ENCODE measurements at regions of chr7 and their contacts with region 1.

Region 1: DNA sequence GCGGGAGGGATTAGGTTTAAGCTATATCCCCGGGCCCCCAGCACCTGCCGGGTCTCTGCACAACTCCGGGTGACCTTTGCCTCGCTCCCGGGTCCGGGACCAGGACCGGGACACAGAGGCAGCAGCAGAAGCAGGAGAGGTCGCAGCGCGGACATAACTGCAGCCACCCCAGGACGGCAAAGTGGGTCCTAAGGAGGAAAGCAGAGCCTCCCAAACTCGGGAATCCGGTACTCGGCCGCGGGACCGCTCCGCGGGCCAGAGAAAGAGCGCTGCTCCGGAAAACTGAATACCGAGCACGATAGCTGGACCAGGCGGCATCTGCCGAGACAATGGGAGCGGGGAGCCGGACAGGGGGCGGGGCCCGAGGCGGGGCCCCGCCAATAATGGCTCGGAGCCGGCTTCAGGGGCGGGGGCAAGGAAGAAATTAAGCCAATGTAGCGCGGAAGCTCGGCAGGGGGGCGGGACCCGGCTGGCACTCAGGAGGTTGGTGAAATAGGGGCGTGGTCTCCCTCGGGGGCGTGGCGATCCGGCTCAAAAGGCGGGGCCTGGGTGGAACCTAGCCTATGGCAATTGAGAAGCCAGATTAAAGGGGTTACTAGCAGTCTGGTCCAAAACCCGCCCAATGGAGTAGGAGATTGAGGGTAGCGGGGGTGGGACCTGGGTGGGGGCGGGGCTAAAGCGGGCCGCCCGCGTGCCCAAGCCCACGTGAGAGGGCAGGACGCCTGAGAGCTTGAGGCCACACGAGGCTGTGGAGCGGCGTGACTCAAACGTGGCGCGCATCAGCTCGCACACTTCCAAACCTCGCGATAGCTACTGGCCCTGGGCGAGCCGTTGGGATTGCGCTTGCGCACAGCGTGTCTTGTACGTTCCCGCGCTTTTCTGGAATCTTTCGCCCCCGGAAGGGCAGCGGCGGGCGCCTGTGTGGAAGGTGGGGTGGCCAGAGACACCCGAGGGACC is at the starts of genes GPC2 and STAG3:
- DNase-seq: peak; percentile 97
- ATAC-seq: peak; percentile 95
- H3K4me3 Mint-ChIP-seq: peak within 1 kb of the TSS; percentile 84
- H3K27ac Mint-ChIP-seq: peak within 1 kb of the TSS; percentile 68
- H3K4me1 Mint-ChIP-seq: peaks cover 21% of the 10 kb centered on the region
- H3K27me3 Mint-ChIP-seq: peaks cover 4% of the 10 kb centered on the region
- CTCF ChIP-seq: no peak
- total RNA-seq, gene GPC2: 5.0 and 5.1 TPM in 2 replicates
- total RNA-seq, gene STAG3: 41.3 and 42.4 TPM in 2 replicates

Region 2: DNA sequence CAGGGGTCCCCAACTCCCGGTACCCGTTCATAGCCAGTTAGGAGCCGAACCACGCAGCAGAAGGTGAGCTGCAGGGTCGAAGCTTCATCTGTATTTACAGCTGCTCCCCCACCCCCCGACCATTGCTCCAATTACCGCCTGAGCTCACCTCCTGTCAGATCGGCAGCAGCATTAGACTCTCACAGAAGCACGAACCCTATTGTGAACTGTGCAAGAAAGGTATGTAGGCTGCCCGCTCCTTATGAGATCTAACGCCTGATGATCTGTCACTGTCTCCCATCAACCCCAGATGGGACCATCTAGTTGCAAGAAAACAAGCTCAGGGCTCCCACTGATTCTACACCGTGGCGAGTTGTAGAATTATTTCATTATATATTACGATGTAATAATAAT is 186.9 kb before region 1 on chr7:
- CTCF ChIA-PET with region 1: no interaction called
- POLR2A ChIA-PET with region 1: no interaction called
- intact Hi-C with region 1: no loop called
- DNase-seq: no peak
- ATAC-seq: no peak
- H3K4me3 Mint-ChIP-seq: no peak overlapping the region
- H3K27ac Mint-ChIP-seq: no peak overlapping the region
- H3K4me1 Mint-ChIP-seq: peaks cover 3% of the 10 kb centered on the region
- H3K27me3 Mint-ChIP-seq: peaks cover 20% of the 10 kb centered on the region
- CTCF ChIP-seq: no peak

Region 3: DNA sequence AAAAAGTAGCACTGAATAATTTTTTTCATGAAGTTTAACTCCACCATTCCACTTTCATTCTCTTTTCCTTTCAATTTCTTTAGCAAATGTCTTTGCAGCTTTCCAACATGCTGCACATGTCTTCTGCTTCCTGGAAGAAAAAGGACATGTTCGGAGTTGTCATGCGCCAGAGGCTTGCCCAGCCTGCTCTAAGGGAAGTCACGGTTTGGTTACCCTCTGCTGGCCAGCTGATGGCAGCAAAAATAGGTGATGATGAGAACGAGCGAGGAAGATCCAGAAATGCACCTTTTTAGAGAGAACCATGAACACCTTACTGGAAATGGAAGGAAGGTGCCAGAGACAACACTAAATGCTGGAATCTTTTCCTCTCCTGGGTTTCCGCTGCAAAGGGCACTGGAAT is 132.6 kb before region 1 on chr7:
- CTCF ChIA-PET with region 1: no interaction called
- POLR2A ChIA-PET with region 1: no interaction called
- intact Hi-C with region 1: no loop called
- DNase-seq: no peak
- ATAC-seq: no peak
- H3K4me3 Mint-ChIP-seq: peak overlapping the region; percentile 60
- H3K27ac Mint-ChIP-seq: no peak overlapping the region
- H3K4me1 Mint-ChIP-seq: peaks cover 13% of the 10 kb centered on the region
- H3K27me3 Mint-ChIP-seq: no peaks in the 10 kb centered on the region
- CTCF ChIP-seq: no peak

Region 4: GRCh38 chr7:100126931-100127865 is 50.1 kb before region 1 on chr7 and contains the start of gene MBLAC1:
- CTCF ChIA-PET with region 1: interaction called, 6 read pairs
- POLR2A ChIA-PET with region 1: interaction called, 7 read pairs
- intact Hi-C with region 1: loop called (anchors 1 kb)
- DNase-seq: peak; percentile 81
- ATAC-seq: peak; percentile 85
- H3K4me3 Mint-ChIP-seq: peak within 1 kb of the TSS; percentile 100
- H3K27ac Mint-ChIP-seq: peak within 1 kb of the TSS; percentile 100
- H3K4me1 Mint-ChIP-seq: peaks cover 41% of the 10 kb centered on the region
- H3K27me3 Mint-ChIP-seq: no peaks in the 10 kb centered on the region
- CTCF ChIP-seq: no peak
- total RNA-seq, gene MBLAC1: 1.9 and 2.2 TPM in 2 replicates

Region 5: GRCh38 chr7:100158229-100159098 is 18.9 kb before region 1 on chr7 and contains the start of gene TRAPPC14:
- CTCF ChIA-PET with region 1: no interaction called
- POLR2A ChIA-PET with region 1: interaction called, 7 read pairs
- intact Hi-C with region 1: loop called (anchors 1 kb)
- DNase-seq: peak; percentile 93
- ATAC-seq: peak; percentile 89
- H3K4me3 Mint-ChIP-seq: peak within 1 kb of the TSS; percentile 85
- H3K27ac Mint-ChIP-seq: peak within 1 kb of the TSS; percentile 86
- H3K4me1 Mint-ChIP-seq: peaks cover 44% of the 10 kb centered on the region
- H3K27me3 Mint-ChIP-seq: no peaks in the 10 kb centered on the region
- CTCF ChIP-seq: no peak
- total RNA-seq, gene TRAPPC14: 55.7 and 65.3 TPM in 2 replicates

Region 6: DNA sequence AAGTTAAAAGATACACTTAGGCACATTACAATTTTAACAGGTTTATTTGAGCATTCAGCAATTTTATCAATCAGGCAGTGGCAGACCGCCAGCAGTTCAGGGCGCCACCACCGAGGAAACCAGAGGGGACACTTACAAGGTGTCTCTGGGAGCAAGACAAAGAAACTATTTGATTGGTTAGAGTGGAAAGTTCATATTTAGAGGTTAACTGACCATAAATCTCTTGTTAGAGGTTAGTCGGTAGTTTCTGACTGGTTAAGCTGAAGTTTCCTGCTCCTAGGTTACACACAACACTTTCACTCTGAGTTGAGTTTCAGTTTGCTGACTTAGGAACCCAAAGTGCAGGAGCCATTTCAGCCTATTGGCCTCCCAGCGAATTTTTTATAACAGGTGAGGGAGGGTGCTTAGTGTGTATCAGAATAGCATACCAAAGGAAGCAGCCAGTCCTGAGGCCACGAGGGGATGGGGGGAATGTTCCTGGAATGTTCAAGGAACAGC is 31.6 kb after region 1 on chr7:
- CTCF ChIA-PET with region 1: no interaction called
- POLR2A ChIA-PET with region 1: no interaction called
- intact Hi-C with region 1: loop called (anchors 5 kb)
- DNase-seq: no peak
- ATAC-seq: peak; percentile 61
- H3K4me3 Mint-ChIP-seq: peak overlapping the region; percentile 64
- H3K27ac Mint-ChIP-seq: peak overlapping the region; percentile 82
- H3K4me1 Mint-ChIP-seq: peaks cover 67% of the 10 kb centered on the region
- H3K27me3 Mint-ChIP-seq: no peaks in the 10 kb centered on the region
- CTCF ChIP-seq: no peak

Region 7: GRCh38 chr7:101357433-101357832 is 1180.1 kb after region 1 on chr7:
- CTCF ChIA-PET with region 1: no interaction called
- POLR2A ChIA-PET with region 1: no interaction called
- intact Hi-C with region 1: no loop called
- DNase-seq: no peak
- ATAC-seq: no peak
- H3K4me3 Mint-ChIP-seq: no peak overlapping the region
- H3K27ac Mint-ChIP-seq: no peak overlapping the region
- H3K4me1 Mint-ChIP-seq: peaks cover 4% of the 10 kb centered on the region
- H3K27me3 Mint-ChIP-seq: peaks cover 15% of the 10 kb centered on the region
- CTCF ChIP-seq: no peak

Measured in activated B cell treated with CpG ODN at 0.5 μM for 24 hours (primary cell).